IMR-90 (cell line): ENCODE measurements at regions of chr2 and their contacts with region 1.

Region 1: GRCh38 chr2:19347619-19348562 is 10.5 kb downstream of the OSR1 start:
- DNase-seq: peak; percentile 98
- ATAC-seq: peak; percentile 94
- H3K4me3 ChIP-seq: peak overlapping the region; percentile 76
- H3K27ac ChIP-seq: peak overlapping the region; percentile 97
- H3K4me1 ChIP-seq: no peaks in the 10 kb centered on the region; the same call in 1 of the 2 replicates
- H3K27me3 ChIP-seq: no peaks in the 10 kb centered on the region
- CTCF ChIP-seq: no peak
- POLR2A ChIP-seq: peak; percentile 94
- RAD21 ChIP-seq: no peak; the same call in 1 of the 2 replicates

Region 2: DNA sequence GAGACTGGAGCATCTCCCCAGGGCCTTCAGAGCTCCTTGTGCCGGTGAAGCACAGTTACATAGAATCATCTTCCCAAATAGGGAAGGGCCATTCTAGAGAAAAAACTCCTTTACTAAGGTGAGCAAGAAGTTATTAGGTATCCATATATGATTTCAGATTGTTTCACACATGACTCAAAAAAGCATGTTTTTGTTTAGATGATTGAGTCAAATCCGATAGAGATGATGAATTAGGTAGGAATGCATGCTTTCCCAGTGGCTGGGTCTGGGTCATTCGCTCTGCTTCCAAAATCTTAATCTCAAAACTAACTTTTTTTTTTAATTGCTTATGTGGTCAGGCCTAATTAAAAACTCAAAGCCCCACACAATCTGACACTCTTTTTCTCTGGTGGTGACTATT is 762.4 kb before region 1 on chr2:
- CTCF ChIA-PET with region 1: no interaction called
- POLR2A ChIA-PET with region 1: no interaction called
- dilution Hi-C with region 1: no loop called
- in situ Hi-C with region 1: no loop called
- intact Hi-C with region 1: no loop called
- DNase-seq: no peak
- ATAC-seq: peak; percentile 17
- H3K4me3 ChIP-seq: no peak overlapping the region
- H3K27ac ChIP-seq: no peak overlapping the region
- H3K4me1 ChIP-seq: no peaks in the 10 kb centered on the region
- H3K27me3 ChIP-seq: no peaks in the 10 kb centered on the region
- CTCF ChIP-seq: no peak
- POLR2A ChIP-seq: no peak
- RAD21 ChIP-seq: no peak

Region 3: GRCh38 chr2:19120941-19121750 is 226.7 kb before region 1 on chr2:
- CTCF ChIA-PET with region 1: no interaction called
- POLR2A ChIA-PET with region 1: interaction called, 3 read pairs
- dilution Hi-C with region 1: no loop called
- in situ Hi-C with region 1: loop called (anchors 10 kb)
- intact Hi-C with region 1: no loop called
- DNase-seq: peak; percentile 87
- ATAC-seq: peak; percentile 88
- H3K4me3 ChIP-seq: no peak overlapping the region
- H3K27ac ChIP-seq: peak overlapping the region; percentile 54
- H3K4me1 ChIP-seq: peaks cover 22% of the 10 kb centered on the region
- H3K27me3 ChIP-seq: no peaks in the 10 kb centered on the region
- CTCF ChIP-seq: no peak
- POLR2A ChIP-seq: no peak
- RAD21 ChIP-seq: peak; percentile 36; the same call in 1 of the 2 replicates

Region 4: DNA sequence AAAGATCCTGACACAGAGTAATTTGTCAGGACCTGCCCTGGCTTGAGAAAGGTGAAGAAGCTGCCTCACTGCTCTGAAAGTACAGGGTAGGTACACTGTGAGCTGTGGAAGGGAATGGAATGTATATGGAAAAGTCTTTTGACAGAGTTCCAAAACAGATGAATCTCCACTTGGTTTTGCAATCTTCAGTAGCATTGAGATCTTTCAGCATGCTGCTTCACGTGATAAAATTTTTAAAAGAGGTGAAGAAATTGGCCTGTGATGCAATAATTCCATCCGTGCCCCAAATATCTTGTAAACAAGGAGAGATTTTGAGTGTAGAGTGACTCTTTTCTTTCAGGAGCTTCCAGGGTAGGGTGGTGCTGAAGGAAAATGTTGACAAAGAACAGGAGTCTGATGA is 112.6 kb before region 1 on chr2:
- CTCF ChIA-PET with region 1: no interaction called
- POLR2A ChIA-PET with region 1: interaction called, 3 read pairs
- dilution Hi-C with region 1: no loop called
- in situ Hi-C with region 1: no loop called
- intact Hi-C with region 1: loop called (anchors 5 kb)
- DNase-seq: peak; percentile 81
- ATAC-seq: peak; percentile 49
- H3K4me3 ChIP-seq: no peak overlapping the region
- H3K27ac ChIP-seq: peak overlapping the region; percentile 6; the same call in 1 of the 2 replicates
- H3K4me1 ChIP-seq: peaks cover 17% of the 10 kb centered on the region
- H3K27me3 ChIP-seq: no peaks in the 10 kb centered on the region
- CTCF ChIP-seq: no peak
- POLR2A ChIP-seq: no peak
- RAD21 ChIP-seq: no peak

Region 5: DNA sequence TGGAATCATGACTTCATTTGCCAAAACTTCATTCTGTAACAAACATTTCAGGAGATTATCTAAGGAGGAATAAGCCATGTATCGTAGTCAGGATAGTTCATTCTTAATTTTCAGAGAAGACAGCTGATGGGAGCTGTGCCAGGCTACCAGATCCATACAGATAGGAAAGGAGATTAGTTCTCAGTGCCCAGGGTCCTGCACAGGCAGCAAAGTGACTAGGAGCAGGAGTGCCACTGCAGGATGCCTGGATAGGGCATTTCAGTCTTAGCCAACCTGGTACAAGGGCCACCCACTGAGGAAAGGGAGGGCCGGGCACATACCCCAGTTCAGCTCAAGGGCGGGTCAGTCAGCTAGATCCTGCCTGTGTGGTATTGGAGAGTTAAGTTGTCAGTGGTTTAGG is 17.2 kb after region 1 on chr2:
- CTCF ChIA-PET with region 1: no interaction called
- POLR2A ChIA-PET with region 1: no interaction called
- dilution Hi-C with region 1: no loop called
- in situ Hi-C with region 1: no loop called
- intact Hi-C with region 1: no loop called
- DNase-seq: no peak
- ATAC-seq: no peak
- H3K4me3 ChIP-seq: no peak overlapping the region
- H3K27ac ChIP-seq: no peak overlapping the region
- H3K4me1 ChIP-seq: peaks cover 2% of the 10 kb centered on the region; the same call in 1 of the 2 replicates
- H3K27me3 ChIP-seq: peaks cover 19% of the 10 kb centered on the region
- CTCF ChIP-seq: no peak
- POLR2A ChIP-seq: no peak
- RAD21 ChIP-seq: no peak